Endothelial cell of umbilical vein (primary cell): ENCODE measurements at regions of chr3 and their contacts with region 1.

Region 1: GRCh38 chr3:15405448-15406050 is 21.8 kb downstream of the METTL6 start:
- DNase-seq: peak; percentile 71
- H3K4me3 ChIP-seq: no peak overlapping the region
- H3K27ac ChIP-seq: no peak overlapping the region
- H3K4me1 ChIP-seq: no peaks in the 10 kb centered on the region
- H3K27me3 ChIP-seq: no peaks in the 10 kb centered on the region
- CTCF ChIP-seq: peak; percentile 49 to 50
- POLR2A ChIP-seq: no peak

Region 2: DNA sequence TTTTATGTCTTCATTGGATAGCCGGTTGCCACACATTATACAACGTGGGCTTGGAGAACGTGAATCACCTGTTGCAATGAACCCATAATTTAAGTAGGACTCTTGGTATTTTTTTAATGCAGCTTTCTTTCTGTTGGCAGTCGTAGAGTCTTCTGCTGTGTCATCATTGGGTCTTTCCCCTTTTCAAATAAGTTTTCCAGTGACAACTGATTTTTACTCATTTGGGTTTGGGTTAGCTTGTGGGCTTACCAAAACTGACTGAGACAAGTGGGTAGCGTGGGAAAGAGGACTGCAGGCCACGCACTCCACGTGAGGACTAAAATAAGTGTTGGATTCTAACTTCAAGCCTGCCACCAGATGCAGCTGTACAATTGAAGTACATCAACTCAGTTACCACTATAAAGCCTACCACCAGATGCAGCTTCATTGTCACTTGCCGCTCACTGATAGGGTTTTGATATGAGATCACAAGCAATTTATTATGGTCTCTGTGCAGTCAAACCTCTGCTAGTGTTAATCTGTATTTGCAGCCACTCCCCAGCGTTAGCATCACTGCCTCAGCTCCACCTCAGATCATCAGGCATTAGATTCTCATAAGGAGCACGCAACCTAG is 205.9 kb before region 1 on chr3:
- CTCF ChIA-PET with region 1: interaction called, 205 read pairs
- POLR2A ChIA-PET with region 1: no interaction called
- dilution Hi-C with region 1: no loop called
- intact Hi-C with region 1: loop called (anchors 1 kb)
- DNase-seq: no peak
- H3K4me3 ChIP-seq: no peak overlapping the region
- H3K27ac ChIP-seq: no peak overlapping the region
- H3K4me1 ChIP-seq: no peaks in the 10 kb centered on the region
- H3K27me3 ChIP-seq: peaks cover 14 to 20% of the 10 kb centered on the region in 2 experiments
- CTCF ChIP-seq: no peak
- POLR2A ChIP-seq: no peak

Region 3: GRCh38 chr3:15256861-15257341 is 148.6 kb before region 1 on chr3:
- CTCF ChIA-PET with region 1: interaction called, 18 read pairs
- POLR2A ChIA-PET with region 1: no interaction called
- dilution Hi-C with region 1: no loop called
- intact Hi-C with region 1: no loop called
- DNase-seq: no peak
- H3K4me3 ChIP-seq: no peak overlapping the region
- H3K27ac ChIP-seq: no peak overlapping the region
- H3K4me1 ChIP-seq: no peaks in the 10 kb centered on the region
- H3K27me3 ChIP-seq: no peaks in the 10 kb centered on the region
- CTCF ChIP-seq: no peak
- POLR2A ChIP-seq: peak; percentile 35

Region 4: DNA sequence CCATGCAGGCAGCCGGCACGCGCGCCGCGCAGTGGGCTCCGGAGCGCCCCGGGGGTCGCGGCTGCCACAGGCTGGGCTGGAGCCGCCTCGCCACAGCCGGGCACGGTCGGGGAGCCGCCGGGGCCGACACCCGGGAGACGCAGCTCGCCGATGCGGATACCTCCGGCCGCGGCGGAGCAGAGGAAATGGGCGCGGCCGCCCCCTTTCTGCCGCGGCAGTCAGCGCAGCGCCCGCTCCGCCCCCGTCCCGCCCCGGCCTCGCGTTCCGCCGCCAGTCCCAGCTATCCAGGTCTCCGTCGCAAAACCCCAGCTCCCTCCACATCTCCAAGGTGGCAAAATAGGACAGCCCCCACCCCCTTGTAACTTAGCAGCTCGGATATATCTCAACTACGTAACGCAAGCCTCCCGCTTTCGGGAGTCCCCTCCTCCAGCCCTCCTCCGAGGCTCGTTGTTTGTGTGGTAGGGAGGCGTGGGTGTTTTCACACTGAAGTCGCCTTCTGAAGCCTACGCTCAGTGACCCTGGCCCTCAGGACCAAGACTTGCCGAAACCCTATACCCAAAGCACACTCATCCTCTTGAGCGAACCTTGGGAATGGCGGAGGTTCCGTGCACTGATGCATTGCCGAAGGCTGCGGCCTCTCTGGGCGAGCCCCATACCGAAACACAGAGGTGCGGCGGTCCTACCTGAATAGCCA is 73.0 kb before region 1 on chr3 and contains the start of gene SH3BP5:
- CTCF ChIA-PET with region 1: interaction called, 19 read pairs
- POLR2A ChIA-PET with region 1: interaction called, 4 read pairs
- dilution Hi-C with region 1: no loop called
- intact Hi-C with region 1: no loop called
- DNase-seq: peak; percentile 68
- H3K4me3 ChIP-seq: peak within 1 kb of the TSS; percentile 91 to 93 (median 92)
- H3K27ac ChIP-seq: peak within 1 kb of the TSS; percentile 61
- H3K4me1 ChIP-seq: peaks cover 37% of the 10 kb centered on the region
- H3K27me3 ChIP-seq: no peaks in the 10 kb centered on the region
- CTCF ChIP-seq: peak; percentile 46 to 72
- POLR2A ChIP-seq: peak; percentile 83
- total RNA-seq, gene SH3BP5: 64.8 and 76.3 TPM in 2 replicates

Region 5: DNA sequence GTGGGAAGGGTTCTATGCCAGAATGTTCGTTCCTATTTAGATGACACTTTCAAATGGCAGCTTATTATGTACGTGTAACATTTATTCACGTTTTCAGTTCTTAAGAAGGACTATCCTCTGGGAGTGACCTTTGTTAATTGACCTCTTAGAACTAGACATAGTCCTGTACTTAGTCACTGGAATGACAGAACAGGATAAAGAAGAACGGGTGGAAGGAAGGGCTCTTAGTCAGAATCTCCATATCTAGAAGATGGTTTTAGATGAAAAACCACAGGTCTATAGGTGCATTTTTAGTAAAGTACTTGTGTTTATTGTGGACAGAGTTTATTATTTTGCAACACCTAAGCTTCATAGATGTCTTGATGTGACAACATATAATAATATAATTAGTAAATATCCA is 15.3 kb after region 1 on chr3:
- CTCF ChIA-PET with region 1: interaction called, 12 read pairs
- POLR2A ChIA-PET with region 1: no interaction called
- dilution Hi-C with region 1: no loop called
- intact Hi-C with region 1: no loop called
- DNase-seq: peak; percentile 41
- H3K4me3 ChIP-seq: no peak overlapping the region
- H3K27ac ChIP-seq: peak overlapping the region; percentile 52
- H3K4me1 ChIP-seq: peaks cover 14% of the 10 kb centered on the region
- H3K27me3 ChIP-seq: no peaks in the 10 kb centered on the region
- CTCF ChIP-seq: no peak
- POLR2A ChIP-seq: no peak

Region 6: GRCh38 chr3:15458212-15458780 is 52.7 kb after region 1 on chr3:
- CTCF ChIA-PET with region 1: no interaction called
- POLR2A ChIA-PET with region 1: no interaction called
- dilution Hi-C with region 1: no loop called
- intact Hi-C with region 1: no loop called
- DNase-seq: no peak
- H3K4me3 ChIP-seq: no peak overlapping the region
- H3K27ac ChIP-seq: no peak overlapping the region
- H3K4me1 ChIP-seq: no peaks in the 10 kb centered on the region
- H3K27me3 ChIP-seq: no peaks in the 10 kb centered on the region
- CTCF ChIP-seq: no peak
- POLR2A ChIP-seq: no peak

Region 7: DNA sequence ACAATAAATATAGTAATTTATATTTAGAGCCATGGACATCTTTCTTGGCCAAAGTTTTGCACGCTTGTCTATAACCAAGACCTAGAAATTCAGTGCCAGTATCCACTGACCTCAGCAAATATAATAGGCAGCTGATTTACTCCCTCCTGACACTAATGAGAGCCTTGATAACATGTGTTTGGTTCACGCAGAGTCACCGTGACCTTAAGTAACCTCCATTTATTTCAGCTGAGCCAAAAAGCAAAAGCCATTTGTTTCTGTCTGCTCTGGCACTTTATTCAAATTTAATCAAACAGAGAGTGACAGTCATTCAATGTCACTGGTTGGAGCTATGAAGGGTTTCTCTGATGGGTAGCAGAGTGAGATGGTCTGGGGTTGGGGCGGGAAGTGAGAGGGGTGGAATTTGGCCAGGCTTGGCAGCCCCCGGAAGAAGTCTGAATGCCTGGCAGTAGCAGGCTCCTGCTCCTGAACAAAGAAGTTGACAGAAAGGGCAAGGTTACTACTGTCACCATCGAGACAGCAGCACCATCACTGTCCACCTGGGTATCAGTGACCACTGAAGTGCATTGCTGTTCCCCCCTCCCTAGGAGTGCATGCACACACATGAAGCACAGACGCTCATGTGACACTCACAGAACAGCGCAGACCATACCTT is 72.9 kb after region 1 on chr3:
- CTCF ChIA-PET with region 1: no interaction called
- POLR2A ChIA-PET with region 1: no interaction called
- dilution Hi-C with region 1: no loop called
- intact Hi-C with region 1: no loop called
- DNase-seq: no peak
- H3K4me3 ChIP-seq: no peak overlapping the region
- H3K27ac ChIP-seq: no peak overlapping the region
- H3K4me1 ChIP-seq: no peaks in the 10 kb centered on the region
- H3K27me3 ChIP-seq: no peaks in the 10 kb centered on the region
- CTCF ChIP-seq: no peak
- POLR2A ChIP-seq: no peak